Activated CD8-positive, alpha-beta T cell treated with anti-CD3 and anti-CD28 coated beads for 36 hours (primary cell): ENCODE measurements at regions of chr3 and their contacts with region 1.

Region 1: GRCh38 chr3:16884084-16884747 is 539 bp upstream of the PLCL2 start:
- DNase-seq: peak; percentile 82
- ATAC-seq: peak; percentile 62
- H3K4me3 Mint-ChIP-seq: peak overlapping the region; percentile 83
- H3K27ac Mint-ChIP-seq: peak overlapping the region; percentile 95
- H3K4me1 Mint-ChIP-seq: peaks cover 20% of the 10 kb centered on the region
- H3K27me3 Mint-ChIP-seq: no peaks in the 10 kb centered on the region
- CTCF ChIP-seq: peak; percentile 76

Region 2: GRCh38 chr3:16813336-16813735 is 70.9 kb before region 1 on chr3:
- CTCF ChIA-PET with region 1: no interaction called
- POLR2A ChIA-PET with region 1: no interaction called
- intact Hi-C with region 1: no loop called
- DNase-seq: no peak
- ATAC-seq: no peak
- H3K4me3 Mint-ChIP-seq: no peak overlapping the region
- H3K27ac Mint-ChIP-seq: no peak overlapping the region
- H3K4me1 Mint-ChIP-seq: peaks cover 18% of the 10 kb centered on the region
- H3K27me3 Mint-ChIP-seq: no peaks in the 10 kb centered on the region
- CTCF ChIP-seq: no peak

Region 3: GRCh38 chr3:16842272-16843270 is 41.6 kb before region 1 on chr3:
- CTCF ChIA-PET with region 1: interaction called, 11 read pairs
- POLR2A ChIA-PET with region 1: interaction called, 10 read pairs
- intact Hi-C with region 1: loop called (anchors 5 kb)
- DNase-seq: peak; percentile 88
- ATAC-seq: peak; percentile 93
- H3K4me3 Mint-ChIP-seq: peak overlapping the region; percentile 71
- H3K27ac Mint-ChIP-seq: peak overlapping the region; percentile 94
- H3K4me1 Mint-ChIP-seq: peaks cover 71% of the 10 kb centered on the region
- H3K27me3 Mint-ChIP-seq: no peaks in the 10 kb centered on the region
- CTCF ChIP-seq: no peak

Region 4: DNA sequence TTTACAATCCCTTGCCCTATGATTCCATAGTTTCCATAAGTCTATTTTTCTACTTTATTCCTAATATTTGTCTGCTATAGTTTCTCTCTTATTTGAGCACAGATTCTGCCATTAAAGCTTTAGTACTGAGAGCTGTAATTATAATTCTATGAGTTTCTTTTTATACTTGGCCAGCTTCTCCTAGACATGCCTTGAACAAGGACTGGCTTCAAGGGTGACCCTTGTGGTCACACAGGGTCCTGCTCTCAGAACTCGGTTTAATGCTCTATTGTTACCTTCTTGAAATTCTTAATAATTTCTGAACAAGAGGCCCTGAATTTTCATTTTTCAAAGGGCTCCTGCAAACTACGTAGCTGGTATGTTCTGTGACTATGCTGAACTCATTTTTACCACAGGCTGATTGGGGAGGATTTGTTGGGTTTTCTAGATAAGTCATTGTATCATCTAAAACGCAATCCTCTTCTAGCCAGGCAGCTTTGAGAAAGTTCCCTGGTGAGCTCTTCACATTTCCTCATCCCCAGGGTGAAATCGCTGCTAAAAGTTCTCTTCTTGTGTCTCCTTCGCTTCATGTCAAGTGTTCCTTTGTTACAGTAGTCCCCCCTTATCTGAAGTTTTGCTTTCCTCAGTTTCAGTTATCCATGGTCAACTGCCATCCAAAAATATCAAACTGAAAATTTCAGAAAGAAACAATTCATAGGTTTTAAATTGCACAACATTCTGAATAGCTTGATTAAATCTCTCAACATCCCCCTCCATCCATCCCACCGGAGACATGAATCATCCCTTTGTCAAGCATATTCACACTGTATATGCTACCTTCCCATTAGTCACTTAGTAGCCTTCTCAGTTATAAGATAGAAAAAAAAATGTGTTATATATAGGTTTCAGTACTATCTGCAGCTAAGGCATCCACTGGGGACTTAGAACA is 12.0 kb before region 1 on chr3:
- CTCF ChIA-PET with region 1: interaction called, 20 read pairs
- POLR2A ChIA-PET with region 1: interaction called, 5 read pairs
- intact Hi-C with region 1: no loop called
- DNase-seq: no peak
- ATAC-seq: no peak
- H3K4me3 Mint-ChIP-seq: no peak overlapping the region
- H3K27ac Mint-ChIP-seq: no peak overlapping the region
- H3K4me1 Mint-ChIP-seq: peaks cover 1% of the 10 kb centered on the region
- H3K27me3 Mint-ChIP-seq: no peaks in the 10 kb centered on the region
- CTCF ChIP-seq: no peak

Region 5: DNA sequence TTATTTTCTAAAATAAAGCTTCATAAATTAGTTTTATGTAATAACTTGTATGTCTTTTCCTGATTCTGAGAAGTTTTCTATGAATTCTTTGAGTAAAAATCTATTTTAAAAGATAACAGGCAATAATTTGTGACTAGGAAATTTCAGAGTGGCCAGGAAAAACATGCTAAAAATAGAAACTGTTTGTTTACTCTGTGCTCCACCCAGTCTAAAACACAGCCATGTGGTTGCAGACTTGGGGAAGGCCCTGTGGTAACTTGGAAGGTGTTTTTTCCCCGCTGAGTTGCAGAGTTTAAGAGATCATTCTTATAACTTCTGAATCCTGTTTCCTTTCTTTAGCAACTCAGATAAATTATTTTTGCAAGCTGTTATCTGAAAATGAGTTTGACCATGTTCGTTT is 22.5 kb after region 1 on chr3:
- CTCF ChIA-PET with region 1: interaction called, 5 read pairs
- POLR2A ChIA-PET with region 1: interaction called, 14 read pairs
- intact Hi-C with region 1: no loop called
- DNase-seq: peak; percentile 45
- ATAC-seq: no peak
- H3K4me3 Mint-ChIP-seq: peak overlapping the region; percentile 29
- H3K27ac Mint-ChIP-seq: peak overlapping the region; percentile 65
- H3K4me1 Mint-ChIP-seq: peaks cover 77% of the 10 kb centered on the region
- H3K27me3 Mint-ChIP-seq: no peaks in the 10 kb centered on the region
- CTCF ChIP-seq: no peak

Region 6: DNA sequence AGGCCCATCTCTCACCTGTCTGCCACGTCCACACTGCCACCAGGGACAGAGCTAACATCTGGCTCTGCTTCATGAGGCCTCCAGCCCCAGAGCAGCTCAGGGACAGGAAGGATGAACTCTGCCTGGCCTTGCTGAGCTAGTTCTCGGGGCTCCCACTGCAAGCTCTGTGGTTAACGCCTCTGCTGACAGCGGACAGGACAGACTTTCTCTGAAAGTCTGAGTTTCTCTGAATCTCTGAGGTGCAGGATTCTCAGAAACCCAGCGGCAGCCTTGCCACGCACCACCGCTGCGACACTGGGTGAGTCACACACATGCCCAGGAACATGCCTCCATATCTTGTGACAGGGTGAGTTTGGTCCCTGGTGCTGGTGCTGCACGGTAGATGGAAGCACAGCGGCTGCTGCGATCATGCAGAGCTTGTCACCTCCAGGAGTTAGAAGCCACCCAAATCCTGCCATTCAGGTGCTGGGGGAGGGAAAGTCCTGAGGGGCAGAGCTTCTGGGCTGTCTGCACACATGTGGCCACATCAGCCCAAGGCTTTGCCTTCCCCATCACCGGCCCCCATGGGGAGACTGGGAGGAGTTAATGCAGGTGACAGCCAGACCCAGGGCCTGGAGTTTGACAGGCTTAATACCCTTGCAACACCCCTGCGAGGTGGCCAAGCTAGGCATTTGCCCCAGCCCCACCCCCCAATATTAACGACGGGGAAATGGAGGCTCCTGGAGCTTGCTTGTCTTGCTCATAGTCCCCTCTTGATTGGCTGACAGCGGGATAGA is 267.6 kb after region 1 on chr3:
- CTCF ChIA-PET with region 1: interaction called, 12 read pairs
- POLR2A ChIA-PET with region 1: interaction called, 4 read pairs
- intact Hi-C with region 1: loop called (anchors 5 kb)
- DNase-seq: peak; percentile 97
- ATAC-seq: peak; percentile 93
- H3K4me3 Mint-ChIP-seq: peak overlapping the region; percentile 59
- H3K27ac Mint-ChIP-seq: peak overlapping the region; percentile 84
- H3K4me1 Mint-ChIP-seq: peaks cover 42% of the 10 kb centered on the region
- H3K27me3 Mint-ChIP-seq: no peaks in the 10 kb centered on the region
- CTCF ChIP-seq: no peak